Endothelial cell of umbilical vein (primary cell): ENCODE measurements at regions of chr17 and their contacts with region 1.

Region 1: DNA sequence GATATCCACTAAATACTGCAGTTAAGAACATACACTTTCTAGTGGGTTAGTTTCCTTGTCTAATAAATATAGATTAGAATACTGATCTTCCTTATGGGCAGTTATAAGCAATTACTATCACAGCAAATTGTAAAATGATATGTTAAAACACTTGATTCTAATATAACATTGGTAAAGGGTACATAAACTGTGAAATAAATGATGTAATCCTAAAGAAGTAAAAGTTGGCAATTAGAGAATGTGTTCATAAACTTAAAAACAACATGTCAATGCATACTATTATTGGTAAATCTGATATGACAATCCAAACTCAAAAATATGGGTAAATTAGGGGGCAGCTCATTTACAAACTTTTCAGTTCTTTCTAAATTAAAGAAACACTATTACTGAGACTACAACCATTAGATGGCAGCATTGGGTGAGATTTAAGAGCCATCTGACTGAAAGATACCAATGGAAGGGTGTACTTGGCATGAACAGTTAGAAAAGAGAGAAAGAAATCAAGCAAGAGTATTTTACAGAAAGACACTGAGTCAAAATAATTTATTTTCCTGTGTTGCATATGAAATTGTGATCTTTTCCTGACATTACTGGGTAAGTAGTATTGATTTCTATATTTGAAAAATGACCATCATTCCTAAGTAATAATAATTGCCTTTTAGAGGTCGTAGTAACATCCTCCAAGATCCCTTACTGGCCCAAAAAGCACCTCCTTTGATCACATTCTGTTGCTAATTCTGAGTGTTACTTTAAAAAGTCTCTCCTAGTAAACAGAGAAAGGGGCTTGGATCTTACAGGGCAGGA is 119.6 kb downstream of the SPAG9 start:
- DNase-seq: peak; percentile 78
- H3K4me3 ChIP-seq: no peak overlapping the region
- H3K27ac ChIP-seq: no peak overlapping the region
- H3K4me1 ChIP-seq: peaks cover 3% of the 10 kb centered on the region
- H3K27me3 ChIP-seq: no peaks in the 10 kb centered on the region
- CTCF ChIP-seq: peak; percentile 18 to 42
- POLR2A ChIP-seq: no peak

Region 2: DNA sequence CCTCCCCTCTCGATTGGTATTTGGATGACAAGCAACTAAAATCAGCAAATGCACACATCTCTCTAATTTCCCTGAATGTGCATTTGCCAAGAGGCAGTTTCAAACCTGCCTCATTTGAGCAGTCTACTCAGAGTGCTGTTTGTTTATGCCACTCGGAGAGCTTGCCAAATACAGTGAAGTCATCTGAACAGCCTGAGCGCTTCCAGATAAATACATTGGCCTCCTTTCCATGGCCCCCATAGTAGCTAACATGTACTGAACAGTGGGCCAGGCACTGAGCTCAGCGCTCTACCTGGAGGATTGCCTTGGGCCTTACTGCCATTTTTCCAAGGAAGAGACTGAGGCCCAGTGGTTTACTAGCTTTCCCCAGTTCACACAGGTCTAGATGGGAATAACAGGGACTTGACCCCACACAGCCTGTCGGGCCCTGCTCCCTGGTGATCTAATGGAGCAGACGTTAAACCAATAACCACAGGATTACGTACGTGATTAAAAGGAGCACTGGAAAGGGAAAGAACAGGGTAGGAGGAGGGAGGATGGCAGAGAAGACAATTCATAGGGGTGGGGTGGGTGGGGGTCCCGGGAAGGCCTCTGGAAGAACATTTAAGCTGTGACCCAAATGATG is 215.0 kb before region 1 on chr17:
- CTCF ChIA-PET with region 1: no interaction called
- POLR2A ChIA-PET with region 1: no interaction called
- dilution Hi-C with region 1: no loop called
- intact Hi-C with region 1: no loop called
- DNase-seq: no peak
- H3K4me3 ChIP-seq: no peak overlapping the region
- H3K27ac ChIP-seq: no peak overlapping the region
- H3K4me1 ChIP-seq: peaks cover 4% of the 10 kb centered on the region
- H3K27me3 ChIP-seq: peaks cover 0 to 2% of the 10 kb centered on the region in 2 experiments
- CTCF ChIP-seq: no peak
- POLR2A ChIP-seq: no peak

Region 3: DNA sequence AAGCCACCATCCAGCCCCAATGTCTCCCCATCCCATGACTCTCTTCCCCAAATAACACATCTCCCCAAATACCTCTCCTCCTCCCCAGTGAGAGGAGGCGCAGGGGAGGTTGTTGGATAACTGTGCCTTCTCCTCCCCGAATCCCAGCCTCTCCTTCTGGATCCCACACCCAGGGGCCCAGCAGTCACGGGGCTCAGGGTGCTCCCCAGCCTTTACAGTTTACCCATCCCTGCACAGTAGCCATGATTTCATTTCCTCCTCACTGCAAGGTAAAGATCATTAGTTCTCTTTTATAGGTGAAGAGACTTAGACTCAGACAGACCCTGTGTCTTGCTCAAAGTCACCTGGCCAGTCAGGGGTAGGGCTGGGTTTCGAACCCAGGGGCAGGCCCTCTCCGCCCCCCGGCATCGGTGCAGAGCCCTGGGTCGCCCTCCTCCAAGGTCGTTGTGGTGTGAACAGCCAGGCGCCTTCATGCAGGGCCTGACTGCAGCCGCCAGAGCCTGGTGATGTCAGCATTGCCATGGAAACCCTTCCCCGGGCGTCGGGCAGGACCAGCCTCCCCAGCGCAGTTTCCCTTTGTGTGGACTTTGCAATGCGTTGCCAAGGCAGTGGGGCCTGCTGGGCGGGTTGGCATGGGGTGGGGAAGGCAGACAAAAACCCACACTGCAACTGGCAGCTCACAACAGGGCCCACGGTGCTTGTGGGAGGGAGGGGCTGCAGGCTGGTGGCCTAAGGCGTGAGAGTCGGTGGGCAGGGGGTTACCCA is 81.5 kb before region 1 on chr17:
- CTCF ChIA-PET with region 1: no interaction called
- POLR2A ChIA-PET with region 1: no interaction called
- dilution Hi-C with region 1: no loop called
- intact Hi-C with region 1: no loop called
- DNase-seq: peak; percentile 81
- H3K4me3 ChIP-seq: no peak overlapping the region
- H3K27ac ChIP-seq: no peak overlapping the region
- H3K4me1 ChIP-seq: peaks cover 4% of the 10 kb centered on the region
- H3K27me3 ChIP-seq: no peaks in the 10 kb centered on the region
- CTCF ChIP-seq: no peak
- POLR2A ChIP-seq: no peak

Region 4: GRCh38 chr17:51035431-51035830 is 34.4 kb after region 1 on chr17:
- CTCF ChIA-PET with region 1: interaction called, 10 read pairs
- POLR2A ChIA-PET with region 1: no interaction called
- dilution Hi-C with region 1: no loop called
- intact Hi-C with region 1: no loop called
- DNase-seq: peak; percentile 68
- H3K4me3 ChIP-seq: no peak overlapping the region
- H3K27ac ChIP-seq: no peak overlapping the region
- H3K4me1 ChIP-seq: peaks cover 3% of the 10 kb centered on the region
- H3K27me3 ChIP-seq: no peaks in the 10 kb centered on the region
- CTCF ChIP-seq: no peak
- POLR2A ChIP-seq: no peak

Region 5: GRCh38 chr17:51046514-51047384 is 45.7 kb after region 1 on chr17:
- CTCF ChIA-PET with region 1: interaction called, 12 read pairs
- POLR2A ChIA-PET with region 1: no interaction called
- dilution Hi-C with region 1: no loop called
- intact Hi-C with region 1: no loop called
- DNase-seq: peak; percentile 72
- H3K4me3 ChIP-seq: no peak overlapping the region
- H3K27ac ChIP-seq: no peak overlapping the region
- H3K4me1 ChIP-seq: no peaks in the 10 kb centered on the region
- H3K27me3 ChIP-seq: no peaks in the 10 kb centered on the region
- CTCF ChIP-seq: no peak
- POLR2A ChIP-seq: no peak

Region 6: GRCh38 chr17:51120739-51121617 is 119.9 kb after region 1 on chr17 and contains the start of gene SPAG9:
- CTCF ChIA-PET with region 1: interaction called, 15 read pairs
- POLR2A ChIA-PET with region 1: no interaction called
- dilution Hi-C with region 1: no loop called
- intact Hi-C with region 1: no loop called
- DNase-seq: peak; percentile 97
- H3K4me3 ChIP-seq: peak within 1 kb of the TSS; percentile 96 to 99 (median 96)
- H3K27ac ChIP-seq: peak within 1 kb of the TSS; percentile 100
- H3K4me1 ChIP-seq: peaks cover 31% of the 10 kb centered on the region
- H3K27me3 ChIP-seq: no peaks in the 10 kb centered on the region
- CTCF ChIP-seq: no peak
- POLR2A ChIP-seq: no peak
- total RNA-seq, gene SPAG9: 73.5 and 75.0 TPM in 2 replicates

Region 7: GRCh38 chr17:51540151-51540550 is 539.1 kb after region 1 on chr17:
- CTCF ChIA-PET with region 1: no interaction called
- POLR2A ChIA-PET with region 1: no interaction called
- dilution Hi-C with region 1: no loop called
- intact Hi-C with region 1: loop called (anchors 10 kb)
- DNase-seq: no peak
- H3K4me3 ChIP-seq: no peak overlapping the region
- H3K27ac ChIP-seq: no peak overlapping the region
- H3K4me1 ChIP-seq: no peaks in the 10 kb centered on the region
- H3K27me3 ChIP-seq: no peaks in the 10 kb centered on the region
- CTCF ChIP-seq: no peak
- POLR2A ChIP-seq: no peak